ENCODE measurements at regions of chr3 and their contacts with region 1.

Region 1: DNA sequence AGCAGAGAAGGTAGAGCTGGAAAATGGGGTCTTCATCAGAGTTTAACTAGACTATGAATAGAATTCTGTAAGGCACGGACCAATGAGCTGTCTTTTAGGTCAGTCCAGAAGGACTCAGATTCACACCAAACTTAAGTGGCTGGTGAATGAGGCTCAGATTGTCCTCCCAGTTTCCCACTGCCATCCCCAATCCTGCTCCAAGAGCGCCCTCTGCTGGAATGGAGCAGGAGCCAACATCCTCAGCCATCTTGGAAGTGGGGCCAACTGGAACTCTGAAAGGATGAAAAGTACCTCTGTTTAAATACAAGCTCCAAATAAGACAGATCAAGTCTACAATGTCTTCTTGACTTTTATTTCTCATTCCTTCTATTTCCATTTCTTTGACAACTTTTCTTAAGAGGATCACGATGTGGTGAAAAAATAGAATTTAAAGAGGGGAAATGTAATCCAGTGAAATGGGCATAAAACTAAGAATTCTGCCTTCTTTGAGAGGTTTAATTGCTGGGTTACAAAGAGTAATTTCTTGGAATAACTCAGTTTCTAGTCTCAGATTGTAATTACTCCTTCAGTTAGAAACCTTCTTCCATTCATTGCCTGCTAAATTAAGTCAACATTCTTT is 217.1 kb upstream of the TPRG1 start:
- DNase-seq: peak; percentile 68 to 90 (median 84)
- H3K4me3 ChIP-seq: no peak overlapping the region
- H3K27ac ChIP-seq: peak overlapping the region in 45 of 59 donors; percentile 0 to 98 (median 51)
- H3K27me3 ChIP-seq: no peaks in the 10 kb centered on the region
- CTCF ChIP-seq: peak; percentile 82 to 99 (median 98)

Region 2: GRCh38 chr3:188154014-188154808 is 800.5 kb before region 1 on chr3 and contains the start of gene LPP:
- intact Hi-C with region 1: loop called (anchors 5 to 10 kb)
- DNase-seq: peak; percentile 28 to 81 (median 54)
- H3K4me3 ChIP-seq: peak within 1 kb of the TSS; percentile 63 to 94 (median 84)
- H3K27ac ChIP-seq: peak within 1 kb of the TSS; percentile 35 to 94 (median 83)
- H3K27me3 ChIP-seq: no peaks in the 10 kb centered on the region
- CTCF ChIP-seq: peak in 21 of 56 donors; percentile 4 to 35 (median 14)
- total RNA-seq, gene LPP: 32.7 to 187 (median 61.2) TPM

Region 3: DNA sequence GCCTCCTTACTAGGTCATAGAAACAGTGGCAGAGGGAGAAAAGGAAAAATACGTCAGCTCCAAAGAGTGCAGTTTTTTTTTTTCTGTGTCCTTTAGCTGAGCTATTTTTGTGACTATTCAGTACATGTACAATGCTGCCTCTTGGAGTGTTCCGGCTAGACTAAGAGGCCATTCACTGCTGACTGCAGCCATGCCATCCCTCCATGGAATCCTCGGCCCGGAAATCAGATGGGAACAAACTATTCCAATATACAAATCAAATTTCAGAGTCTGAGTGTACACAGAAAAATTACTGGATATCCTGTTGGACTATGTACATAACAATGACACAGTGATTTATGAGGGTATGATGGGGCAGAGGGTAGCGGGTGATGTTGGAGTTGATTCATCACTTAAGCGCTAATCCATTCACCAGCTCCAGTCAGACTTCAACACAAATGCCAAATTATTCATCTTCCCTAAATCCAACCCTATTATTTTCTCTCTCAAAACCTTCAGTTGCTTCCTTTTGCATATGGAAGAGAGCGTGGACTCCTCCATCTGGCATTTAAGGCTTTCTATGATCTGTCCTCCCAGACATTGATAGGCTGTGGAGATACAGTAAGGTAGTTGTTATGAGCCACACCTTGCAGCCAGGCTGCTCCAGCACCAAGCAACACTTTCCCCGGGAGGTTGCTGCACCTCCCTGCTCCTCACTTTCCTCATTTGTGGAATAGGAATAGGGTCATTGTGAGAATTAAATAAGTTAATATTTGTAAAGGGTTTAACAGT is 691.6 kb before region 1 on chr3:
- intact Hi-C with region 1: loop called in 1 of 2 experiments (anchors 5 kb)
- DNase-seq: peak in 6 of 10 donors; percentile 52 to 76 (median 60)
- H3K4me3 ChIP-seq: peak overlapping the region in 26 of 59 donors; percentile 2 to 50 (median 18)
- H3K27ac ChIP-seq: peak overlapping the region; percentile 27 to 95 (median 82)
- H3K27me3 ChIP-seq: no peaks in the 10 kb centered on the region
- CTCF ChIP-seq: peak in 18 of 56 donors; percentile 6 to 41 (median 20)

Region 4: DNA sequence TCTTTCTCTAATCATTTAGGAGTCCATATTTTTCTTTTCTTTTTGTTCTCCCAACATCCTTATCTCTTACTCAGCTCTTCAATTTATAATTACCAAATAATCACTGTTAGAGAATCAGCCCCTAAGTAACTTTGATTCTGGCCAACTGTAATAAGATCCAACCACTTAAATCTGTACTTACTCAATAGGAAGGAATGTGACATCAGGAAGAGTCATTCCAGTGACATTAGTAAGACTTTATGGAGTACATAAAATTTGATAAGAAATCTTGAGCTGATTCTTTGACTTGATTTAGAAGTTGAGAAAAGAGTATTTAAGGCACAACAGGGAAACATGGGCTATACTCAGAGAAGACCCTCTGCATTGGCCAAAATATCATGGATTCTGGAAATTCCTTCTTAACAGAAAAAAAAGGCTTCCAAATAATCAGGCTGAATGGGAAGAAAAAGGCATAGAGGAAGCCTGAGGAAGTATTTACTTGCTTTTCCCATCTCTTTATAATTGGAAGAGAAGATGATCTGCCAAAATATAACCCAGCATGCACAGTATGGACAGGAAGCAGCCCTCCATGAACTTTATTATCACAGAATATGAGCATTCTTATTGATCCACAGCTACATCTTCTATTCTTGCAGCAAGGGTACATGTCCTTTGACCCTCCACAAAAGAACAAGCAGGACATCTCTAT is 72.6 kb before region 1 on chr3:
- intact Hi-C with region 1: no loop called
- DNase-seq: no peak
- H3K4me3 ChIP-seq: no peak overlapping the region
- H3K27ac ChIP-seq: peak overlapping the region in 1 of 59 donors; percentile 4
- H3K27me3 ChIP-seq: no peaks in the 10 kb centered on the region
- CTCF ChIP-seq: no peak

Region 5: DNA sequence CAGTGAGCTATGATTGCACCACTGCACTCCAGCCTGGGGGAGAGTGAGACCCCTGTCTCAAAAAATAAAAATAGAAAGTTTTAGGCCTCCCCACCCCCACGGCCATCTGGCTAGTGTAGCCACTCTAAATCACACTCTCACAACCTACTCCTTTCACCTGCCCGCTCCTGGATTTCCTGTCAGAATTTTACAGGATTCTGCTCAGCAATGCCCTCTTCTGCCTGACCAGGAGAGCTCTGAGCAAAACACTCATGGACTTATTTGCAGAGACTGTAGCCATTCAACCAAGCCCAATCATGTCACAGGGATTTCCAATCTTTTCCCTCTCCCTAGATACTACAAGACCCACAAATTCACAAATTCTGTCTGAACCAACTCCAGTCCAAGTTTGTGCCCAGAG is 25.6 kb before region 1 on chr3:
- intact Hi-C with region 1: no loop called
- DNase-seq: peak in 1 of 10 donors; percentile 55
- H3K4me3 ChIP-seq: no peak overlapping the region
- H3K27ac ChIP-seq: no peak overlapping the region
- H3K27me3 ChIP-seq: no peaks in the 10 kb centered on the region
- CTCF ChIP-seq: peak in 19 of 56 donors; percentile 10 to 32 (median 19)

Region 6: DNA sequence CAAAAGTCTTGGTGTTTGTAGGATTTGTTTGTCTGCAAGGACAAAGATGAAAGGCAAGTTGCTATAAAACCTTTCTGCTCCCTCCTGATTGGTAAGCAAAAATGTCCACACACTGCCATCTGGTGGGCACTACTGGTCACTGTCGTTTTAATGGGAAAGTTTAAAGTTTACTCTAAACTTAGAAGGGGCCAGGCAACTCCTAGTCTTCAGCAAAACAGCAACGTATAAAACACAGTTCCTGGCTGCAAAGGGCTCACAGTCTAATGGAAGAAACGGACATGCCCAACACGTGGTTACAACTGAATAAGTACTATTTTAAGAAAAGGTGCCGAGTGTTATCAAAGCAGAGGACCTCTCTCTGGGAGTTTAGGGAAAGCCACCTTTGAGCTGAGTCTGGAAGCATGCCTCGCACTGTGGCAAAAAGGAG is 193.4 kb after region 1 on chr3:
- intact Hi-C with region 1: loop called (anchors 2 to 5 kb)
- DNase-seq: peak in 9 of 10 donors; percentile 27 to 67 (median 49)
- H3K4me3 ChIP-seq: no peak overlapping the region
- H3K27ac ChIP-seq: peak overlapping the region in 4 of 59 donors; percentile 5 to 32 (median 14)
- H3K27me3 ChIP-seq: peaks cover 0 to 2% (median 0%) of the 10 kb centered on the region in 45 donors
- CTCF ChIP-seq: peak; percentile 68 to 95 (median 86)

Region 7: DNA sequence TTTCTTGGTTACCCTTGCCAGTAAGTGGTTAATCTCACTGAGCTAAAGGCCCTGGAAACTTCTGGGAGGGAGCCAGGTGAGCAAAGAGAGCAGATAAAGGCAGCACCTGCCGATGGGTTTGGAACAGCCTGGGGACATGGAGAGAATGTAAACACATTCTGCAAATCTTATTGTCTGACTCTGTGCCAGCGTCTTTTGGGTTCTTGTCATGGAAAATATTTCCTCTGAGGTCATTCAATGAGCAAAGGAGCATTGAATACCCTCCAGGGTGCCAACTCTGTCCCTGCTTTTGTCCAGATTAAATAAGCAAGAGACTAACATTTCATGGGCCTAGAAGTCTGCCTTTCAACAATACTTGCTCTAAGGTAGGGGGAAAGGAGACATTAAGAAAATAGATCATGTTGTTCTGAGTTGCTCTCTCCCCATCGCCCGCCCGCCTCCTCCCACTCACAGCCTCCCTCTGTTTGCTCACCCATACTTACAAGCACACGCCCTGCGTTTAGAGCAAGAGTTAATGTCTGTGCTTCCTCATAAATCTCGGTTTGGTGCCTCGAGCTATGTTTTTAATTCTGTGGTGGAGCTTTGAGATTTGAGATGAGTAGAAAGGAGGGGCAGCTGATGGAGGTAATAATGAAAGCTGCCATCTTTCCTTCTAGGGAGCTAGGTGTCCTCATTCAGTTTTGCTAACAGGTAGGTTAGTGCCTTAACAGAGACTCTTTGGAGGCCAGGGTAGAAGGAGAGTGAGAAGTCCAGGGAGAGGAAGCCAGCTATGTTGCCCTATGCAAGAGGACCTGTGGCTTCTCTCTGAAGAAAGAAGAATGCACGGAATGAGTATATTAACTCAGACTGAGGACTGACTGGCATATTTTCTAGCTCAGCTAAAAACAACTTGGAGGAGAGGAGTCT is 350.0 kb after region 1 on chr3:
- intact Hi-C with region 1: no loop called
- DNase-seq: peak in 1 of 10 donors; percentile 55
- H3K4me3 ChIP-seq: no peak overlapping the region
- H3K27ac ChIP-seq: no peak overlapping the region
- H3K27me3 ChIP-seq: no peaks in the 10 kb centered on the region
- CTCF ChIP-seq: no peak